ENCODE measurements at regions of chr1 and their contacts with region 1.

Region 1: GRCh38 chr1:147273409-147274336 is 31.2 kb downstream of the CHD1L start:
- DNase-seq: peak; percentile 11
- H3K4me3 Mint-ChIP-seq: no peak overlapping the region
- H3K27ac Mint-ChIP-seq: no peak overlapping the region
- H3K4me1 Mint-ChIP-seq: no peaks in the 10 kb centered on the region
- H3K27me3 Mint-ChIP-seq: no peaks in the 10 kb centered on the region

Region 2: DNA sequence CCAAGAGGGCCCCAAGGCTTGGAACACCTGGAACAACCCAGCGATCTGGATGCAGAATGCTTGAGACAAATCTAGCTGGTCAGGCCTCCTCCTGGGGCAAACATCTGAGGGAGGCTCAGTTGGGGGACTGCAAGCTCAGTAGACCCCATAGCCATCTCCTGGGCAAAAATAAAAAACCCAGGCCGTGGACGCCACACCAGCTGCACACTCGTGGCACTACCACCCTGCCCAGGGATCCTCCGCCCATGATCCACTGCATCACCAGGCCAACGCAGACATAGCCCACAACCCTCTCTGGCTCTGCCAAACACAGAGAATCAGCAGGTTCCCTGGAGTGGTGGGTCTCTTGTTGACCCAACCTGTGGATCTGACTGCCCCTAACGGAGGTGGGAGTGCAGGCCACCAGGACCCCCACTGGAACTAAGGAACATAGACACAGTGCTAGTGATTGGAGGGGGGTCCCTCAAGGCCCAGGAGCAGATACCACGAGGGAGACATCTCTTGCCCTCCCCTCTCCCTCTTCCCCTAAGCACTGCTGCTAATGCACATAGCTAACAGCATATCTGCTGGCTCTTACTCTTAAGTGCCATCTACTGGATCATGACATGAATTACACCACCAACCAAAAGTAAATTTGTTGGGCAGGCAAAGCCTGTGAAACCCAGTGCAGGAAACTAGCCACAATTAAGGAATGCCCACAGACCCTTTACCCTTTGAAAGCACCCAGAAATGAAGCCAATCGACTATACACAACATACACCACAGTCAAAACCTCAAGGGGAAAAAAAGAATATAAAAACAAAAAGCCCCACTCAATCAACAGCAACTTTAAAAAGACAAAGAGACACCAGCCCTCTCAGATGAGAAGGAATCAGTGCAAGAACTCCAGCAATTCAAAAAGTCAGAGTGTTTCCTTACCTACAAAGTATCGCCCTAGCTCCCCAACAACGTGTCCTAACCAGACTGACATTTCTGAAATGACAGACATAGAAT is 116.2 kb after region 1 on chr1:
- intact Hi-C with region 1: loop called (anchors 1 kb)
- DNase-seq: peak; percentile 7
- H3K4me3 Mint-ChIP-seq: no peak overlapping the region
- H3K27ac Mint-ChIP-seq: no peak overlapping the region
- H3K4me1 Mint-ChIP-seq: no peaks in the 10 kb centered on the region
- H3K27me3 Mint-ChIP-seq: peaks cover 10% of the 10 kb centered on the region

Measured in activated T-helper 1 cell treated with anti-CD3 and anti-CD28 coated beads, Interleukin-12 subunit alpha, Interleukin-12 subunit beta, Interleukin-2, Interleukin-4 antibody, amounts not matched to agents 30 ng/mL and 10 ng/mL and 1 ng/mL, durations not matched to agents 14 hours and 24 hours and 36 hours (primary cell).